ENCODE measurements at regions of chr2 and their contacts with region 1.

Region 1: DNA sequence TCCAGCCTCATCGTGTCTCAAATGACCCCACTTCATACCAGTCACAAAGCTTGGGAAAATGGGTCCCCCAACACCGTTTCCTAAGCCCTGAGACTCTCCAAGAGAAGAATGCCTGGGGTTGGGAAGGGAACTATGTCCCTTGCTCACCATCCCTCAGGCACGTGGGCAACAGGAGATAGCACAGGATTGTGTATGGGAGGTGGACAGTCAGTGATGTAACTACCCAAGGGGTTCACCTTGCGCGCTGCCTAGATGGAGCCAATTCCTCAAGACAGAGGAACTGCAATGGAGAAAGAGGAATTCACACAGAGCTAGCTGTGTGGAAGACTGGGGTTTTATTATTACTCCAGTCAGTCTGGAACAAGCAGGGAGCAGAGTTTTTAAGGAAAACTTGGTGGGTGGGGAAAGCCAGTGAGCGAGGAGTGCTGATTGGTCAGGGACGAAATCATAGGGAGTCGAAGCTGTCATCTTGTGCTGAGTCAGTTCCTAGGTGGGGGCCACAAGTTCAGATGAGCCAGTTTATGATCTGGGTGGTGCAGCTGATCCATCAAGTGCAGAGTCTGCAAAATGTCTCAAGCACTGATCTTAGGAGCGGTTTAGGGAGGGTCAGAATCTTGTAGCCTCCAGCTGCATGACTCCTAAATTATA is 13.8 kb upstream of the CXCR1 start:
- DNase-seq: no peak
- H3K4me3 ChIP-seq: no peak overlapping the region
- H3K4me1 ChIP-seq: no peaks in the 10 kb centered on the region
- H3K27me3 ChIP-seq: peaks cover 2% of the 10 kb centered on the region; the same call in 1 of the 2 replicates

Region 2: GRCh38 chr2:218257390-218257981 is 76.9 kb after region 1 on chr2:
- in situ Hi-C with region 1: loop called (anchors 5 kb)
- DNase-seq: peak; percentile 18 to 77
- H3K4me3 ChIP-seq: no peak overlapping the region
- H3K4me1 ChIP-seq: no peaks in the 10 kb centered on the region
- H3K27me3 ChIP-seq: no peaks in the 10 kb centered on the region